Activated T-helper 1 cell treated with anti-CD3 and anti-CD28 coated beads, Interleukin-12 subunit alpha, Interleukin-12 subunit beta, Interleukin-2, Interleukin-4 antibody, amounts not matched to agents 30 ng/mL and 10 ng/mL and 1 ng/mL, durations not matched to agents 14 hours and 24 hours and 36 hours (primary cell): ENCODE measurements at regions of chr7 and their contacts with region 1.

Region 1: GRCh38 chr7:21945454-21946227 is at the start of gene CDCA7L:
- DNase-seq: peak; percentile 54
- H3K4me3 Mint-ChIP-seq: peak within 1 kb of the TSS; percentile 94
- H3K27ac Mint-ChIP-seq: peak within 1 kb of the TSS; percentile 95
- H3K4me1 Mint-ChIP-seq: peaks cover 69% of the 10 kb centered on the region
- H3K27me3 Mint-ChIP-seq: peaks cover 16% of the 10 kb centered on the region
- total RNA-seq, gene CDCA7L: 102 and 113 TPM in 2 replicates

Region 2: GRCh38 chr7:21767300-21767900 is 178.2 kb before region 1 on chr7:
- intact Hi-C with region 1: loop called (anchors 10 kb)
- DNase-seq: peak; percentile 4
- H3K4me3 Mint-ChIP-seq: no peak overlapping the region
- H3K27ac Mint-ChIP-seq: no peak overlapping the region
- H3K4me1 Mint-ChIP-seq: peaks cover 11% of the 10 kb centered on the region
- H3K27me3 Mint-ChIP-seq: peaks cover 7% of the 10 kb centered on the region

Region 3: GRCh38 chr7:22082886-22083703 is 137.5 kb after region 1 on chr7:
- intact Hi-C with region 1: loop called (anchors 2 kb)
- DNase-seq: peak; percentile 63
- H3K4me3 Mint-ChIP-seq: peak overlapping the region; percentile 75
- H3K27ac Mint-ChIP-seq: no peak overlapping the region
- H3K4me1 Mint-ChIP-seq: peaks cover 5% of the 10 kb centered on the region
- H3K27me3 Mint-ChIP-seq: peaks cover 30% of the 10 kb centered on the region

Region 4: DNA sequence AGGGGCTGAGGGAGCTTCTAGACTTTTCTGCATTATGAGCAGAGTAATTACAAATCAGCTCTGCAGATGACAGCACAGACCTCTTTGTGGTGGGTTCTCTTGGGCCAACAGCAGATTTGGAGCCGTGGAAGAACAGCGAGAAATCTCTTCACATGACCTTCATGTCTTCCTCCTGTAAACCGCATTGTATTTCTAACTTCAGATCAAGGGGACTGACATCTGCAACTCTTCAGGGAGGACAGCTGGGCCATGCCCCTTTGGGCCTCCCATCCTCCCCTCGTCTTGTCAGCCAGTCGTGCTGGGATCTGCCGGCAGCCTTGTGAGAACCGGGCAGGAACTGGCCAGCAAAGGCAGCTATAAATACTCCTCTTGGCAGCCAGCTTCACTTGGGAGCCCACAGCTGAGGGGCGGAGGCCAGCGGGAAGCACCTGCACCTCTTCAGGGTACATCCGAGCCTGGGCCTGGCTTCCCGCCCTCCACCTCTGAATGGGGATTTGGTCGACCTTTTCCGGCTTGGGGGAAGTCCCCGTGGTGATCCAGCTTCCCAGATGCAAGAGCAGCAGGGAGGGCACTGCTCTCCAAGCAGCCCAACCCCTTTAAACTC is 499.6 kb after region 1 on chr7:
- intact Hi-C with region 1: loop called (anchors 5 kb)
- DNase-seq: no peak
- H3K4me3 Mint-ChIP-seq: no peak overlapping the region
- H3K27ac Mint-ChIP-seq: no peak overlapping the region
- H3K4me1 Mint-ChIP-seq: peaks cover 21% of the 10 kb centered on the region
- H3K27me3 Mint-ChIP-seq: peaks cover 8% of the 10 kb centered on the region